ENCODE measurements at regions of chr1 and their contacts with region 1.

Region 1: GRCh38 chr1:229661022-229661877 is 35.2 kb downstream of the URB2 start:
- DNase-seq: peak; percentile 70
- ATAC-seq: peak; percentile 87
- H3K4me3 Mint-ChIP-seq: no peak overlapping the region
- H3K27ac Mint-ChIP-seq: peak overlapping the region; percentile 50
- H3K4me1 Mint-ChIP-seq: peaks cover 11% of the 10 kb centered on the region
- H3K27me3 Mint-ChIP-seq: no peaks in the 10 kb centered on the region
- CTCF ChIP-seq: peak; percentile 21

Region 2: DNA sequence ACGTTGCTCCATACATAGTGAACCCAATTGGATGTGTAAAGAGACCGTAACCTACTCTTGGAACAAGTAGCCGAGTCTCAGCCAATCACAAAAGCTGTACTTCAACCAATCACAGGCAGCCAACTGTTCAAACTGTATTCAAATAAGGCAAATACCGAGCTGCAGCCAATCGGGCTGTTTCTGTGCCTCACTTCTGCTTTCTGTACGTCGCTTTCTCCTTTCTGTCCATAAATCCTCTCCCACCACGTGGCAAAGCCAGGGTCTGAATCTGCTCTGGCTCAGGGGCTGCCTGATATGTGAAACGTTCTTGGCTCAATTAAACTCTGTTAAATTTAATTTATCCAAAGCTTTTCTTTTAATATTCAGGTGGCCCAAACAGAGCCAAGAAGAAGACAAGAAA is 175.1 kb after region 1 on chr1:
- CTCF ChIA-PET with region 1: no interaction called
- POLR2A ChIA-PET with region 1: no interaction called
- intact Hi-C with region 1: no loop called
- DNase-seq: no peak
- ATAC-seq: no peak
- H3K4me3 Mint-ChIP-seq: no peak overlapping the region
- H3K27ac Mint-ChIP-seq: no peak overlapping the region
- H3K4me1 Mint-ChIP-seq: peaks cover 11% of the 10 kb centered on the region
- H3K27me3 Mint-ChIP-seq: peaks cover 20% of the 10 kb centered on the region
- CTCF ChIP-seq: no peak

Region 3: DNA sequence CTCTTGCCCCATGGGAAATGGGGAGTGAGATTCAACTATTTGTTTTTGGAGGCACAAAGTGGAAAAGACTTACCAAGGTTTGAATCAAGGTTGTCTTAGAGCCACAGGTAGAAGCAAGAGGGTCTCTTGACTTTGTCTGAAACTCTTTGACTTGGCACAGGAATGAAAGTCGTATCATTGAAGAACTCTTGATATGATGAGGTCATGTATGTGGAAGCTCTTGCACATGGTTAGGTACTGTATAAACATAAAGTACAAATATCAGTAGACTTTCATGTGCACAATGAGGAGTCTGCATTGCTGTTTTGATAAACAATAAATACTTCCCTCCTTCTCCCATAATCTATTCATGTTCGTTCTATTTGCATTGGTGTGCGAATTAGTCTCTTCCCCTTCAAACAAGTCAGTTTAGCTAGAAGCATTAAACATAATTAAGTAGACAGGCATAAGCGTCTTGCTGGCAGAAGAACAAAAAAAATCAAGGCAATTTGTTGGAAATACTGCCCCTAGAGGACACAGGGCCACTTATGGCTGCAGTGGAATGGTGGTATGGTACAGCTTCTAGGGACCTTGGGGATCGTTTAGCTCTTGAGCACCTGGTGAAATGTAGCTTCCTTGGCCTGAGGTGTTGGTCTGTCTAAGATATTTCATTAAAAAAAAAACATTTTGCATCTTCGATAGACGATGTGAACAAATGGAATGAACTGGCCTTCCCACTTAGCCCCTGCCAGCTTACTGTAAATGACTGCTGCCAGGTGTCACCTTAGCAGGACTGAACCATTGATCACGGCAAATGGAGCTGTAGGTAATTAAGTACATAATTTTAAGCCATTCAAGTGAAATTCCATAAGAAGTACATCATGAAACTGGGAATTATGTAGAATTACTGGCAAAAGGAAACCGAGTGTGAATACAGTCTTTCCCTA is 187.8 kb after region 1 on chr1:
- CTCF ChIA-PET with region 1: interaction called, 7 read pairs
- POLR2A ChIA-PET with region 1: no interaction called
- intact Hi-C with region 1: loop called (anchors 2 kb)
- DNase-seq: no peak
- ATAC-seq: no peak
- H3K4me3 Mint-ChIP-seq: no peak overlapping the region
- H3K27ac Mint-ChIP-seq: no peak overlapping the region
- H3K4me1 Mint-ChIP-seq: peaks cover 25% of the 10 kb centered on the region
- H3K27me3 Mint-ChIP-seq: peaks cover 2% of the 10 kb centered on the region
- CTCF ChIP-seq: no peak

Measured in activated B cell treated with CpG ODN at 0.5 μM for 24 hours (primary cell).